SK-N-SH (cell line): ENCODE measurements at regions of chr3 and their contacts with region 1.

Region 1: GRCh38 chr3:11060500-11061251 is 68.1 kb downstream of the SLC6A1 start:
- DNase-seq: peak; percentile 89
- H3K4me3 ChIP-seq: peak overlapping the region; percentile 51 to 88
- H3K27ac ChIP-seq: peak overlapping the region in 1 of 2 experiments; percentile 37; a peak in 1 of 4 replicates
- H3K4me1 ChIP-seq: peaks cover 0 to 9% of the 10 kb centered on the region in 2 experiments; a peak in 1 of 4 replicates
- H3K27me3 ChIP-seq: no peaks in the 10 kb centered on the region
- CTCF ChIP-seq: peak; percentile 87
- EP300 ChIP-seq: no peak
- RAD21 ChIP-seq: peak; percentile 79

Region 2: DNA sequence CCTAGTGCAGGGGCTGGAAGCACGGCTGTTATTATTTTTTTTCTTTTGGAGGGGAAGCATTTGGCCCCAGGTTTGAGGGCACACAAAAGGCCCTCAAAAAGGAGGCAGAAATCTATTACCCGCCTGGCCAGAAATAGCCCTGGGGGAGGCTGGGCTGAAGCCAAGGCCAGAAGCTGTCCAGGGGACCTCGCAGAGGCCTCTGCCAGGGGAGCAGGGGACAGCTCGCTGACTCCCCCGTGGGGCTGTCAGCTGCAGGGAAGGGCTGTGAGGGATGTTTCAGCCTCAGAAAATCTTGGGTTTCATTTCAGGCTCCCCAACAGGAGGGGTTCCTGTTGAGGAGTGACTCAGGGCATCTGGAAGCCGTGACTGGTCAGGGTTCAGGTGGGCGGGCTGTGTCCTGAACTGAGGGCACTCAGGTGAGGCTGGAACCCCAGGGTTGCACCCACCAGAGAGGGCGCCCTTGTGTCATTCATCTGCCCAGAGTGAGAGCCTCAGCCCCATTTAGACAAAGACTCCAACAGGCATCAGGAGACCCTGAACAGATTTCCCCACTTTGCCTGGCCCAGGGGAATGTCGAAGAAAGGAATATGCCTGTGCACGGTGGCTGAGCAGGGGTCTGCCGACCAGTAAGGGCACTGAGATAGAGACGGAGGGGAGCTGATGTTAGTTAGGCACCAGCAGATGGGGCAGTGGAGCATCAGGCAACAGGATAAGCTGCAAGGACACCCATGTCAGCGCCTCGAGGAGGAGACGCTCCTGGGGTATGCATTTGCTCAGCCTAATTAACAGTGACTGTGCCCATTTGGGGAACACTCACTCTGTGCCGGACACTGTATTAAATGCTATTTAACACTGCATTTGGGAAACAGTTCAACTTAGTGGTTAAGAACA is 288.2 kb before region 1 on chr3:
- CTCF ChIA-PET with region 1: interaction called, 22 read pairs
- POLR2A ChIA-PET with region 1: no interaction called
- DNase-seq: peak; percentile 58
- H3K4me3 ChIP-seq: no peak overlapping the region
- H3K27ac ChIP-seq: no peak overlapping the region
- H3K4me1 ChIP-seq: peaks cover 0 to 3% of the 10 kb centered on the region in 2 experiments; a peak in 1 of 4 replicates
- H3K27me3 ChIP-seq: no peaks in the 10 kb centered on the region
- CTCF ChIP-seq: 0 out of 2 replicates have a peak, but pooled peaks have one; percentile 8
- EP300 ChIP-seq: no peak
- RAD21 ChIP-seq: no peak

Region 3: DNA sequence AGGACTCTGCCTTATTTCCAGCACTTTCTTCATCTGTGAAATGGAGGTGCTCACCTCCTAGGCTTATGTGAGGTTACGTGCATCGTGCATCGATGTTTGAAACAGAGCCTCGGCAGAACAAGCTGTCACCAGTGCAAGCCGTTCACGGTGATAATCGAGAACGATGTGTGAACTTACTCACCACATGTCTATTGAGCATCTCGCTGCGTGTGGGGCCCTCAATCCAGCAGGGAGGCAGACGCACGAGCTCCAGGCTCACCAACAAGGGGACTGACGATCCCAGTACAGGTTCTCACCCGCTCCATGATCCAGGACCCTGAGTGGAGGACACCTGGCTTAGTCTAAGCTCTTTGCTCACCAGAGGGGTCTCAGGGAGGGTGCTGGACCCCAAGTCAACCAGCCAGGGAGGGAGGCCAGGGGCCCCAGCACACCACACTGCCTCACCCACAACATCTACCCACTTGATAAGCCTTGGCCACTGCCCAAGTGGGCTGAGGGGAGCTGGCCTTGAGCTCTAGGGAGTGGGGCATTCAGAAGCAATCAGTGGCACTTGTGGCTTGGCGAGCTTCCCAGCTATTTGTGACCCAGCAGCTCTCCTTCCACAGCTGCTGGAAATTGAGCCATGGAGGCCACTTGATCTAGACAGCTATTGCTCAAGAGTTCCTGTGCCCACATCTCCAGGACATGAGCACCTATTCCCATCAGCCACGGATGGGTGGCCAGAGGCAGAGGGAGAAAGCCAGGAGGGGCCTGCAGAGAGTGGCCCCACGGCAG is 102.5 kb before region 1 on chr3:
- CTCF ChIA-PET with region 1: interaction called, 74 read pairs
- POLR2A ChIA-PET with region 1: no interaction called
- DNase-seq: no peak
- H3K4me3 ChIP-seq: no peak overlapping the region
- H3K27ac ChIP-seq: no peak overlapping the region
- H3K4me1 ChIP-seq: no peaks in the 10 kb centered on the region; a peak in 1 of 4 replicates
- H3K27me3 ChIP-seq: no peaks in the 10 kb centered on the region; the same call in 1 of the 2 replicates
- CTCF ChIP-seq: no peak
- EP300 ChIP-seq: no peak
- RAD21 ChIP-seq: no peak

Region 4: GRCh38 chr3:10992017-10992941 is 68.4 kb before region 1 on chr3 and contains the start of gene SLC6A1:
- CTCF ChIA-PET with region 1: interaction called, 16 read pairs
- POLR2A ChIA-PET with region 1: no interaction called
- DNase-seq: peak; percentile 82
- H3K4me3 ChIP-seq: peak within 1 kb of the TSS; percentile 3 to 31; a peak in 2 of 4 replicates
- H3K27ac ChIP-seq: no peak within 1 kb of the TSS; a peak in 1 of 4 replicates
- H3K4me1 ChIP-seq: peaks cover 0 to 9% of the 10 kb centered on the region in 2 experiments; a peak in 1 of 4 replicates
- H3K27me3 ChIP-seq: peaks cover 49% of the 10 kb centered on the region
- CTCF ChIP-seq: 0 out of 2 replicates have a peak, but pooled peaks have one; percentile 14
- EP300 ChIP-seq: no peak
- RAD21 ChIP-seq: no peak
- polyA plus RNA-seq, gene SLC6A1: not detected in 2 replicates

Region 5: DNA sequence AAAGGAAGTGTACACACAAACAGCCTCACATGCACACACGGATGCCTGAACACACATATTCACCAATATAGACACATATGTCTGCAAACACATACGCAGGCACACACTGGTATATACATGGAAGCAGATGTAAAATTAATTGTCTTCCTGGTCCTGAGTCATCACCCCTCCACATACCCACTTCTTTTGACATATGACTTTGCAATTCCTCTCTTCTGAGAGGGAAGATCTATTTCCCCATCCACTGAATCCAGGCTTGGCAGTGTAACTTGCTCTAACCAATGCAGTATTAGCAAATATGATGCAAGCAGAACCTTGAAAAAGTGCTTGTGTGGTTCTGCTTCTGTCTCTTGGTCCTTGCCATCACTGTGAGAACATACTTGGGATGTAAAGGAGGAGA is 16.8 kb after region 1 on chr3:
- CTCF ChIA-PET with region 1: interaction called, 33 read pairs
- POLR2A ChIA-PET with region 1: no interaction called
- DNase-seq: no peak
- H3K4me3 ChIP-seq: no peak overlapping the region
- H3K27ac ChIP-seq: no peak overlapping the region
- H3K4me1 ChIP-seq: no peaks in the 10 kb centered on the region; a peak in 1 of 4 replicates
- H3K27me3 ChIP-seq: no peaks in the 10 kb centered on the region
- CTCF ChIP-seq: no peak
- EP300 ChIP-seq: no peak
- RAD21 ChIP-seq: no peak

Region 6: GRCh38 chr3:11195721-11196332 is 135.2 kb after region 1 on chr3:
- CTCF ChIA-PET with region 1: interaction called, 16 read pairs
- POLR2A ChIA-PET with region 1: no interaction called
- DNase-seq: no peak
- H3K4me3 ChIP-seq: peak overlapping the region; percentile 14 to 47; a peak in 3 of 4 replicates
- H3K27ac ChIP-seq: peak overlapping the region; percentile 50 to 94
- H3K4me1 ChIP-seq: peaks cover 18 to 34% of the 10 kb centered on the region in 2 experiments
- H3K27me3 ChIP-seq: no peaks in the 10 kb centered on the region
- CTCF ChIP-seq: no peak
- EP300 ChIP-seq: peak in 1 of 2 experiments; percentile 27; a peak in 1 of 4 replicates
- RAD21 ChIP-seq: no peak